ENCODE measurements at regions of chr5 and their contacts with region 1.

Region 1: DNA sequence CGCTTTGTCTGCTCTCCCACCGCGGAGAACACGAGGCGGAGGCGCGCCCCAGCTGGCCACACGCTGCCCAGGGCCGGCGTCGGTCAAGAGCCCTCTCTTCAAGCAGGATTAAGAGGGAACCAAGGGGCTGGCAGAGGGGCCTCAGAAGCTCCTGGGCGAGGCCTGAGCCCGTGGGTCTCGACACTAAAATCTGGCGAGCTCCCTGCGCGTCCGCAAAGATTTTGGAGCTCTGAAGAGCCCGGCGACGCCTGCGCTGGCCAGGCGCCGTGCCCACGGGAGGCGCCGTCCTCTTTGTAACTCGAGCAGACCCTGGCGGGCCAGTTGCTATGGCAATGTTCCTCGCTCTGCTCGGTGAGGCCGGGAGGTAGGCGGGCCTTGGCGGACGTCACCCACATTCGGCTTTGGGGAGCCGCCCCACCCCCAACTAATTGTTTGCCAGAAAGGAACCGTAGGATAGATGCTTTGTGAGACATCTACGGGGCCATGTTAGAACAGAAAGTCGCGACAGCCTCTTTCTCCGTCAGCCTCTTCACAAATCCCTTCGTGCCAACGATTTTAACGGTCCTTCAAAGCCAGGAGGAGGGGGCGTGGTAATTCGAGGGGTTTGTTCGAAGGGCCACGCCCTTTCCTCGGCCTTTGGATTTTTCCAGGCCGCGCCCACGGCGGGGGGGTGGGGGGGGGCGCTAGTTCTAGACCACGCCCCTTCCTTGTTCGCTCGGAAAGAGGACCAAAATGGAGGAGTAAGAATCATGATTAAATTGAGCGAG is 714 bp upstream of the CNOT8 start:
- DNase-seq: peak; percentile 98 to 99
- H3K4me3 ChIP-seq: peak overlapping the region; percentile 85 to 92
- H3K27ac ChIP-seq: peak overlapping the region; percentile 98
- H3K4me1 ChIP-seq: peaks cover 0 to 44% (median 23%) of the 10 kb centered on the region in 4 donors
- H3K27me3 ChIP-seq: no peaks in the 10 kb centered on the region
- CTCF ChIP-seq: peak in 1 of 2 experiments; percentile 6

Region 2: GRCh38 chr5:154754460-154755360 is 103.0 kb before region 1 on chr5:
- intact Hi-C with region 1: loop called (anchors 2 kb)
- DNase-seq: peak; percentile 100
- H3K4me3 ChIP-seq: peak overlapping the region; percentile 93 to 98
- H3K27ac ChIP-seq: peak overlapping the region; percentile 95 to 98
- H3K4me1 ChIP-seq: peaks cover 0 to 40% (median 24%) of the 10 kb centered on the region in 4 donors
- H3K27me3 ChIP-seq: no peaks in the 10 kb centered on the region
- CTCF ChIP-seq: peak; percentile 27 to 55

Region 3: DNA sequence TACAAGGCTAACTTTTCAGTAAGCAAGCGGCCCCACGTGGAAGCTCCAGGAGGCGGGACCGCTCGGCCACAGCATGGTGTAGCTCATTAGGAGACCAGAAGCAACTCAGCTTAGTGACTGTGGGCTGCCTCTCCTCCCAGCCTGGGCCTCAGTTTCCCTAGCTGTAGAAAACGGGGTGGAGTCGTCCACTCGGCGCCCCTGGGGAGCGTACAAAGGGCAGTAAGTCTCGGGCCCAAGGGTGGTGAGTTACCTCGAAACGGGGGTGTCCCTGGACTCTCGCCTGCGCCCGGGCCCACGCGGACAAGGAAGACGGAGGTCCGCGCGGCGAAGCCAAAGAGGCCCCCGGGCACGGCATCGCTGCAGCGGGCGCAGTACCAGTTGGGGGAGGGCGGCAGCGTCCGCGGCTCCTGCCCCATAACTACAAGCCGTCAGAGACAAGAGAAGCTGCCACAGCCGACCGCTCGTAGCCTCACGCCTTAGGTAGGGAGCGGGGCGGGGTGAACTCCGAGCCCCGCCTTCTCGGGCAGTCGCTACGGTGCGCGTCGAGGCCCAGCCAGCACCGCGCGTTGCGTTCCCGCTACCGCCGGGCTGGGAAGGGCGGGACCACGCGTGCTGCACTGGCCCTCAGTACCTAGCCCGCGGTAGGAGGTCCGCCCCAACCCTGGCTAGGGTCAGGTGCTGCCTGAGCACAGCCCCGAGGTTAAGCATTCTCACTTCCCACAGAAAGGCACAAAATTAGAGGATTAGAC is 80.2 kb after region 1 on chr5 and contains the start of gene GEMIN5:
- intact Hi-C with region 1: loop called (anchors 5 kb)
- DNase-seq: peak; percentile 73 to 87
- H3K4me3 ChIP-seq: peak within 1 kb of the TSS; percentile 93 to 97
- H3K27ac ChIP-seq: peak within 1 kb of the TSS; percentile 84 to 85
- H3K4me1 ChIP-seq: peaks cover 0 to 37% (median 28%) of the 10 kb centered on the region in 4 donors
- H3K27me3 ChIP-seq: no peaks in the 10 kb centered on the region
- CTCF ChIP-seq: no peak

Region 4: GRCh38 chr5:155556700-155557099 is 699.0 kb after region 1 on chr5:
- intact Hi-C with region 1: no loop called
- DNase-seq: no peak
- H3K4me3 ChIP-seq: no peak overlapping the region
- H3K27ac ChIP-seq: no peak overlapping the region
- H3K4me1 ChIP-seq: no peaks in the 10 kb centered on the region
- H3K27me3 ChIP-seq: no peaks in the 10 kb centered on the region
- CTCF ChIP-seq: no peak

Measured in tibial artery (tissue), 4 donors.